ENCODE measurements at regions of chr11 and their contacts with region 1.

Region 1: DNA sequence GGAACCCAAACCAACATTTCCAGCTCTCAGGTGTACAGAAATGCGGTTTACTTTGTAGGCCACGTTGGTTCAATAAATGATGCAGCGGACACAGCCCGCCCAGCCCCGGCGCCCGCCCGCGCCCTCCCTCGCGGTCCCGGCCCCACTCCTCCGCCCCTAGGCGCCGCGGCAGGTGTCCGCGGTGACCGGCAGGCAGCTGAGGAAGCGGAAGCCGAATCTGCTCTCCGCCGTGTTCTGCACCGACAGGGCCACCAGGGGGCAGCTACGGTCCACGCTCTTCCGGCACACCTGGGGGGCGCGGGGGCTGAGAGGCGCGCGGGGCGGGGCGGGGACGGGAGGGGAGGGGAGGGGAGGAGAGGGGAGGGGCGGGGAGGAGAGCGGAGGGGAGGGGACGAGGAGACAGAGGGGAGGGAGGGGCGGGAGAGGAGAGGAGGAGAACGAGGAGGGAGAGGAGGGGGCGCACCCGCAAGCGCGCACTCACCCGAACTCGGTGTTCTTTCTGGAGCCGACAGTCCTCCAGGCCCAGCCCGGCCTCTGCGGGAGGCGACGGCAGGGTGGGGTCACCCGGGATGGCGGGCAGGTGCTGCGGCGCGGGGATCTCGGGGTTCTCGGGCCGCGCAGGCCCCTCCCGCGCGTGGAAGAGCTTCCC is 5.6 kb downstream of the LMNTD2 start:
- DNase-seq: peak; percentile 81
- ATAC-seq: peak; percentile 71
- H3K4me3 Mint-ChIP-seq: peak overlapping the region; percentile 43
- H3K27ac Mint-ChIP-seq: no peak overlapping the region
- H3K4me1 Mint-ChIP-seq: peaks cover 6% of the 10 kb centered on the region
- H3K27me3 Mint-ChIP-seq: peaks cover 13% of the 10 kb centered on the region

Region 2: DNA sequence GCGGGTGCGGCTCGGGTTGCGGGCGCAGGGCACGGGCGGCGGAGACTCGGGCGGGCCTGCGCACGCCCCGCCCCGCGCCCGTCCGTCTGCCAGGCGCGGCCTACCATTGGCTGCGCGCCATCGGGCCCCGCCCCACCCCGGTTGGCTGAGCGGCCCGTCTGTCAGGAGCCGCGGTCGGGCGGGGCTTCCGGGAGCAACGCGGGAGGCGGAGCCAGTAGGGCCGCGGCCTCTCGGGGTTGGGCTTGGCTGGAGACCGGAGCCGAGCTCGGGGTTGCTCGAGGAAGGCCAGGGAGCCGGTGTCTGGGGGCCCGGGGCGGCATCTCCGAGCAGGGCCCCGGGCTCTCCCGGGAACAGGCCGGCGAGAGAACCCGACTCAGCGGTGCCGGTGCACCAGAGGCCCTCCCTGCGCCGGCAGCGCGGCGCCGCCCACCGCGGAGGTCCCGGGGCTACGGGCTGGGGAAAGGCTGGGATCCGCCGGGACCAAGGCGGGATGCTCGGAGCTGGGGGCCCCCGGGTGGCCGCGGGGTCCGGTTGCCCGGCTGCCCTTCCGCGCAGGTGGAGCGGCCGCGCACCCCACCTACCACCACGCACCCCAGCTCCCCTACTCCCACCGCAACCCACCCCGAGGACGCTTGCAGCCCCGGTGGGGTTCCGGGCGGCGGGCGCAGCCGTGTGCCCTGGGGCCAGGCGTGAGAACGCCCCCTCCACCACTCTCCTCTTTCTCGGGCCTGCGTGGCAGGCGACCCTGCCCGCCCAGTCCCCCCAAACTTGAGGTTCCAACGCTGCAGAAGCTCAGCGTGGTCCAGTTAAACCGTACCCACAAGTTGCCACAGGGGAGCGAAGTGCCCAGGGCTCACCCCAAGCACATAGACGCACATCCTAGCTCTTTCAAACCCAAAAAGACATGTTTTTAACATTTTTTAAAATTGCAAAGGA is 19.2 kb before region 1 on chr11 and contains the start of gene HRAS:
- CTCF ChIA-PET with region 1: interaction called, 15 read pairs
- POLR2A ChIA-PET with region 1: interaction called, 4 read pairs
- DNase-seq: peak; percentile 96
- ATAC-seq: peak; percentile 88
- H3K4me3 Mint-ChIP-seq: peak within 1 kb of the TSS; percentile 88
- H3K27ac Mint-ChIP-seq: peak within 1 kb of the TSS; percentile 93
- H3K4me1 Mint-ChIP-seq: peaks cover 26% of the 10 kb centered on the region
- H3K27me3 Mint-ChIP-seq: no peaks in the 10 kb centered on the region
- total RNA-seq, gene HRAS: 58.7 to 68.9 TPM

Region 3: DNA sequence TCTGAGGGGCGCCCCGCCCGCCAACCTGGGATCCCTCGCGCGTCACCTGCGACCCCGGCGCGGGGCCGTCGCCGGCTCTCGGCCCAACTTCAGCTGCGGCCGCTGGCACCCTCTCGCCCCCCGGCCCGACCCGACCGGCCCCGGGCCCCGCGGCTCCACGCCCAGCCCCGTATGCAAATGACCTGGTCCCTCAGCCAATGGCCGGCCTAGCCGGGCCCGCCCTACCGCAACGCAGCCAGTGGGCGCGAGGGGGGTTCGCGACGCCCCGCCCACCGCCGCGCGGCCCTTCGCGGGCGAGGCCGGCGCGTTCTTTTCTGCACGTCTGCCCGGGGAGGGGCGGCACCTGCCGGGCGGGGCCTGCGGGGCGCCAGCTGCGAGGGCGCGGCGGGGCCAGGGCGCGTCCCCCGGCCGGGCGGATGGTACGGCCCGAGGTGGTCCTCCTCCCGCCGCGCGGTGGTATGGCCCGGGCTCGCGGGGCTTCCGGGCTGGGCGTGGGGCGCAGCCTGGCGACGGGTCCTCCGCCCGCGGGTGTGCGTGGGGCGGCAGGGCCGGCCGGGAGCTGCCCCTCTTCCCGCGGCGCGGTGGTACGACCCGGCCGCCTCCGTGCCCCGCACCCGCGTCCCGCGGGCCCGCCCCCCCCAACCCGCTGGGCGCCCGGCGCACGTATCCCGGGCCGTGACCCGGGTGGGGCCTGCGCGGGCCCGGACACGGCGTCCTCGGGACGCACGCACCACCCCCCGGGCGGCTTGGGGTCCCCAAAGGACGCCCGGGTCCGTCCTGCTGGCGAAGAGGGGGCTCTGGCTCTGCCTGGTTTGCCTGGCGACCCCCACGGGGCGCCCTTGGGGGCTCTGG is 13.6 kb after region 1 on chr11:
- CTCF ChIA-PET with region 1: interaction called, 23 read pairs
- POLR2A ChIA-PET with region 1: interaction called, 5 read pairs
- DNase-seq: peak; percentile 95
- ATAC-seq: peak; percentile 96
- H3K4me3 Mint-ChIP-seq: peak overlapping the region; percentile 81
- H3K27ac Mint-ChIP-seq: peak overlapping the region; percentile 78
- H3K4me1 Mint-ChIP-seq: peaks cover 17% of the 10 kb centered on the region
- H3K27me3 Mint-ChIP-seq: peaks cover 2% of the 10 kb centered on the region

Region 4: GRCh38 chr11:575996-576768 is 21.2 kb after region 1 on chr11 and contains the start of gene PHRF1:
- CTCF ChIA-PET with region 1: interaction called, 16 read pairs
- POLR2A ChIA-PET with region 1: no interaction called
- DNase-seq: peak; percentile 96
- ATAC-seq: peak; percentile 86
- H3K4me3 Mint-ChIP-seq: peak within 1 kb of the TSS; percentile 89
- H3K27ac Mint-ChIP-seq: peak within 1 kb of the TSS; percentile 98
- H3K4me1 Mint-ChIP-seq: peaks cover 51% of the 10 kb centered on the region
- H3K27me3 Mint-ChIP-seq: peaks cover 15% of the 10 kb centered on the region
- total RNA-seq, gene PHRF1: 53.7 to 58.1 TPM

Region 5: DNA sequence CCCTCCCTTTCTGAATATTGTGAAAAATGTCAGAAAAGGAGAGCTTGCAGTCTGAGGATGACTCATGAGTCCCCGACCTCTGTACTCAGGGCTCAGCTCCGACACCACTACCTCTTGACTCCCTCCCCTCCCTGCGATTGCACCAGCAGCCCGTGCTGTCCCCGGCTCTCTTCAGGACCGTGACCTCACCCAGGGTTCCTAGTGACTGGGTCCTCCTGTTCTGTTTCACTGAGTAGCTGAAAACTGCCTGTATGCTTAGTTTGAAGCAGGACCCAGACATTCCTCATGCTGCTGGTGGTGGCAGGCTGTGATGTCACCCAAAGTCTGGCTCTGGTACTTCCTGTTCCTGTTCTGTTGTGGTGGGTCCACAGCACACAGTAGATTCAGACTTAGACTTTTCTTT is 33.0 kb after region 1 on chr11:
- CTCF ChIA-PET with region 1: interaction called, 22 read pairs
- POLR2A ChIA-PET with region 1: no interaction called
- DNase-seq: peak; percentile 86
- ATAC-seq: peak; percentile 96
- H3K4me3 Mint-ChIP-seq: peak overlapping the region; percentile 77
- H3K27ac Mint-ChIP-seq: peak overlapping the region; percentile 100
- H3K4me1 Mint-ChIP-seq: peaks cover 34% of the 10 kb centered on the region
- H3K27me3 Mint-ChIP-seq: no peaks in the 10 kb centered on the region

Region 6: GRCh38 chr11:613369-614268 is 58.7 kb after region 1 on chr11:
- CTCF ChIA-PET with region 1: interaction called, 15 read pairs
- POLR2A ChIA-PET with region 1: interaction called, 3 read pairs
- DNase-seq: peak; percentile 89
- ATAC-seq: peak; percentile 18
- H3K4me3 Mint-ChIP-seq: peak overlapping the region; percentile 95
- H3K27ac Mint-ChIP-seq: peak overlapping the region; percentile 90
- H3K4me1 Mint-ChIP-seq: peaks cover 30% of the 10 kb centered on the region
- H3K27me3 Mint-ChIP-seq: no peaks in the 10 kb centered on the region

Region 7: GRCh38 chr11:640021-640706 is 85.2 kb after region 1 on chr11:
- CTCF ChIA-PET with region 1: no interaction called
- POLR2A ChIA-PET with region 1: no interaction called
- DNase-seq: no peak
- ATAC-seq: no peak
- H3K4me3 Mint-ChIP-seq: no peak overlapping the region
- H3K27ac Mint-ChIP-seq: peak overlapping the region; percentile 61
- H3K4me1 Mint-ChIP-seq: peaks cover 16% of the 10 kb centered on the region
- H3K27me3 Mint-ChIP-seq: peaks cover 32% of the 10 kb centered on the region

Region 8: GRCh38 chr11:727859-728748 is 173.2 kb after region 1 on chr11:
- CTCF ChIA-PET with region 1: interaction called, 86 read pairs
- POLR2A ChIA-PET with region 1: interaction called, 7 read pairs
- DNase-seq: peak; percentile 88
- ATAC-seq: peak; percentile 72
- H3K4me3 Mint-ChIP-seq: no peak overlapping the region
- H3K27ac Mint-ChIP-seq: no peak overlapping the region
- H3K4me1 Mint-ChIP-seq: peaks cover 16% of the 10 kb centered on the region
- H3K27me3 Mint-ChIP-seq: peaks cover 5% of the 10 kb centered on the region

Measured in activated CD8-positive, alpha-beta T cell treated with anti-CD3 and anti-CD28 coated beads, Interleukin-2, amount 10 ng/mL, durations not matched to agents 7 days and 5 days (primary cell).